Panc1 (cell line): ENCODE measurements at regions of chrX and their contacts with region 1.

Region 1: GRCh38 chrX:134355996-134356395 is 104.0 kb upstream of the HPRT1 start:
- DNase-seq: no peak
- ATAC-seq: no peak
- H3K4me3 ChIP-seq: no peak overlapping the region
- H3K27ac ChIP-seq: no peak overlapping the region
- H3K4me1 ChIP-seq: no peaks in the 10 kb centered on the region
- H3K27me3 ChIP-seq: 0 out of 2 replicates have a peak, but pooled peaks cover 3% of the 10 kb centered on the region
- CTCF ChIP-seq: no peak

Region 2: DNA sequence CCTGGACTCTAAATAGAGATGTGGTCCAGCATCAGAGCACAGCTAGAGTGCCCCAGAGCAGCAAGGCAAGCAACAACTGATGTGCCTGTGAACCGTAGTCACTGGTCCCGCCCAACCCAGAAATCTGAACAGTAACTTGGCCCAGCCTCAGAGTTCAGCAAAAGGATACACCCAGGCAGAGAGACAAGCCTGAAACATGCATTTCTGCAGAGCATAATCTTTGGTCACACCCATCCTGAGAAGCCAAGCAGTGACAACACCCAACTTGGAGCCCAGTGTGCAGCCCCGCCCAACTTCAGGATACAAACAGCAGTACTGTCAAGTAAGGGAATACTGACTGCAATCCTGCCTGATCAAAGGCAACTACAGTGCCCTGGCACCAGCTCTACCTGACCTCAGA is 40.1 kb before region 1 on chrX:
- CTCF ChIA-PET with region 1: interaction called, 10 read pairs
- POLR2A ChIA-PET with region 1: no interaction called
- in situ Hi-C with region 1: no loop called
- intact Hi-C with region 1: no loop called
- DNase-seq: no peak
- ATAC-seq: no peak
- H3K4me3 ChIP-seq: no peak overlapping the region
- H3K27ac ChIP-seq: no peak overlapping the region
- H3K4me1 ChIP-seq: no peaks in the 10 kb centered on the region
- H3K27me3 ChIP-seq: no peaks in the 10 kb centered on the region
- CTCF ChIP-seq: no peak

Region 3: DNA sequence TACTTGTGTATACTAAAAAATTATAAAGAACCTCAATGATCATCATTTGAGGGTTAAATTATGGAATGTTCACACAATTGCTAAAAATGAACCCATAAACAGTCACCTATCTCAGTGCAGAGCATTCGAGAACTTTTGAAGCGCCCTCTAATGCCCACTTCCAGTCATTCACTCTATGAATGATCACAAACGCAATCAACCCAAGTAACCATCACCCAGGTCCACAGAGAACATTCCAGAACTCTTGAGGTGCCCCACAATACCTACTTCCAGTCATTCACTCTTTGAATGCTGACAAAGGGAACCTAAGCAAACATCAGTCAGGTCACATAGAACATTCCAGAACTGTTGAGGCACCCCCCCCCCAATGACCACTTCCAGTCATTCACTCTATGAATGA is 405.8 kb after region 1 on chrX:
- CTCF ChIA-PET with region 1: no interaction called
- POLR2A ChIA-PET with region 1: no interaction called
- in situ Hi-C with region 1: no loop called
- intact Hi-C with region 1: no loop called
- DNase-seq: no peak
- ATAC-seq: 0 out of 2 replicates have a peak, but pooled peaks have one; percentile 50
- H3K4me3 ChIP-seq: no peak overlapping the region
- H3K27ac ChIP-seq: no peak overlapping the region
- H3K4me1 ChIP-seq: no peaks in the 10 kb centered on the region
- H3K27me3 ChIP-seq: no peaks in the 10 kb centered on the region
- CTCF ChIP-seq: peak; percentile 71